ENCODE measurements at regions of chr1 and their contacts with region 1.

Region 1: GRCh38 chr1:6359216-6360116 is 34.1 kb downstream of the ACOT7 start:
- DNase-seq: no peak
- ATAC-seq: no peak
- H3K4me3 ChIP-seq: no peak overlapping the region
- H3K27ac ChIP-seq: peak overlapping the region; percentile 51; the same call in 1 of the 2 replicates
- H3K4me1 ChIP-seq: peaks cover 35 to 65% of the 10 kb centered on the region in 2 experiments
- H3K27me3 ChIP-seq: no peaks in the 10 kb centered on the region
- CTCF ChIP-seq: no peak
- POLR2A ChIP-seq: no peak
- RAD21 ChIP-seq: no peak

Region 2: DNA sequence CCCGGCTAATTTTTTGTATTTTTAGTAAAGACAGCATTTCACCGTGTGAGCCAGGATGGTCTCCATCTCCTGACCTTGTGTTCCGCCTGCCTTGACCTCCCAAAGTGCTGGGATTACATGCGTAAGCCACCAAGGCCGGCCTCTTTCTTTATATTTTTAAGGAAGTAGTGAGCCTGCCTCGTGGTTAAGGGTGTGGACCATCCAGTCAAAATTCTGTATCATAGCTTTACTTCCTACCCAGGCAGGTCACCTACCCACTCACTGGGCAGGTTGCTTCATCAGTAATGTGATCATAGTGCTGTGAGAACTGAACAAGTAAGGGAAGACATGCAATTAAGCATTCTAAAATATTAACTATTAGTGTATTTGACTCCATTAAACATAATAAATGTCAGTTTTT is 42.2 kb after region 1 on chr1:
- CTCF ChIA-PET with region 1: interaction called, 5 read pairs
- POLR2A ChIA-PET with region 1: no interaction called
- RAD21 ChIA-PET with region 1: interaction called in 1 of 2 experiments, 4 read pairs
- intact Hi-C with region 1: loop called (anchors 1 kb)
- DNase-seq: no peak
- ATAC-seq: no peak
- H3K4me3 ChIP-seq: no peak overlapping the region
- H3K27ac ChIP-seq: no peak overlapping the region
- H3K4me1 ChIP-seq: peaks cover 0 to 11% of the 10 kb centered on the region in 2 experiments; a peak in 3 of 4 replicates
- H3K27me3 ChIP-seq: no peaks in the 10 kb centered on the region
- CTCF ChIP-seq: no peak
- POLR2A ChIP-seq: no peak
- RAD21 ChIP-seq: no peak

Region 3: DNA sequence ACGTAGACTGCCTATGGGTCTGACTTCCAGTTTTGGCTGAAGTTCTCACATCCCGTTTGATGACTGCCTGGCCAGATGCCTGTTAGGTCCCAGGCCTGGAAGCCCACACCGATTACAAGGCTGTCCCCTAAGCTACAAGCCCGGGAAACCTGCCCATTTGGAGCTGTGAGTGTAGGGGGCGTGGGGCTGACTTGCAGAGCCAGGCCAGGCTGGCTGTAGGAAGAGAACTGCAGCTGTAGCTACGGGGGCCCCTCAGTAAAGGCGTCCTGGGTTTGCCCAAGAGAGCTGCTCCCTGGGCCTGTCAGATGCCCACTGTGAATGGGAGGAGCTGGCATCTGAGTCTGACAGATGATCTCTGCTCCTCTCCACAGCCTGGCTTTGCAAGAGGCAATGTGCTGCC is 625.5 kb after region 1 on chr1:
- CTCF ChIA-PET with region 1: no interaction called
- POLR2A ChIA-PET with region 1: no interaction called
- RAD21 ChIA-PET with region 1: no interaction called
- intact Hi-C with region 1: no loop called
- DNase-seq: no peak
- ATAC-seq: no peak
- H3K4me3 ChIP-seq: no peak overlapping the region
- H3K27ac ChIP-seq: no peak overlapping the region
- H3K4me1 ChIP-seq: peaks cover 0 to 8% of the 10 kb centered on the region in 2 experiments; a peak in 1 of 4 replicates
- H3K27me3 ChIP-seq: no peaks in the 10 kb centered on the region
- CTCF ChIP-seq: no peak
- POLR2A ChIP-seq: no peak
- RAD21 ChIP-seq: no peak

Region 4: DNA sequence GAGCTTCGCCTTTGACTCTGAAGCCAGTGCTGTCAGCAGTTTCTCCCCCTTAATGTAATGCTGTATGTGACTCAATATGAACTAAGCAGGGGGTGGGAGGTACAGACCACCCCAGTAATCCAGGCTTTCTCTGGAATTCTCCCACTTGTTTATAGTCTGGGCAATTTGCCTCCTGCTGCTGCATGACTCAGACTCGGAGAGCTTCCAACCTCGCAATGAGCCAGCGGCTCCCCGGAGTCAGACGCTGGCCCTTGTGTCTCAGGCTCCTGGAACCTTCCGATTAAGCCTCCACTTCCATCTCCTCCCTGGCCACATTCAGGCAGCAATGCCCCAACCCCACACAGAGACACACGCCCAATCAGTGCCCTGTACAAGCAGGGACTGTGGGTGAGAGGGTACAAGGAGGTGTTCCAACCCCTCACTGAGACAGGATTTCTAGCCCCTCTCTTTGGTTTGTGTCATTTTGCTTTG is 939.9 kb after region 1 on chr1:
- CTCF ChIA-PET with region 1: no interaction called
- POLR2A ChIA-PET with region 1: no interaction called
- RAD21 ChIA-PET with region 1: no interaction called
- intact Hi-C with region 1: no loop called
- DNase-seq: peak; percentile 82
- ATAC-seq: peak; percentile 79
- H3K4me3 ChIP-seq: peak overlapping the region in 1 of 2 experiments; percentile 40; a peak in 3 of 4 replicates
- H3K27ac ChIP-seq: peak overlapping the region; percentile 85
- H3K4me1 ChIP-seq: peaks cover 55 to 59% of the 10 kb centered on the region in 2 experiments
- H3K27me3 ChIP-seq: no peaks in the 10 kb centered on the region
- CTCF ChIP-seq: no peak
- POLR2A ChIP-seq: no peak
- RAD21 ChIP-seq: peak; percentile 43